Spleen (tissue), 13 donors: ENCODE measurements at regions of chr9 and their contacts with region 1.

Region 1: DNA sequence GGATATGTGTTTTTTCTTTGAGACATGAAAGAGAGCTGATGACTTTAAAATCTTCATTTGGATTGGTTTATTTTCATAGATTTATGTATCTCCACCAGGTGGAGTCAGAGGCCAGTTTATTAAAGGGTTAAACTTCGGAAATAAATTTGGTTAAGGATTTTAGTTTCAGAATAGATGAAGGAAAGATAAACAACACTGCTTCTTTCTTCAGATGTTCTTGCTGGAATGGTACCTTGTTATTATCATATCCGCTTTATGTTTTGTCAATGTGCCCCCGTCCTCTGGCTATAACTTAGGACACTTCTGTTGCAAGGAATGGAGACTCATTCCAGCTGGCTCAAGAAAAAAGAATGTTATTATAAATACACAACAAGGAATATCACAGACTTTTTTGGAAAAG is 81.2 kb downstream of the ALDH1A1 start:
- DNase-seq: no peak
- H3K4me3 ChIP-seq: no peak overlapping the region
- H3K27ac ChIP-seq: no peak overlapping the region
- H3K4me1 ChIP-seq: peaks cover 0 to 10% (median 0%) of the 10 kb centered on the region in 6 donors
- H3K27me3 ChIP-seq: no peaks in the 10 kb centered on the region
- CTCF ChIP-seq: peak in 7 of 11 experiments; percentile 3 to 49 (median 34)
- POLR2A ChIP-seq: no peak

Region 2: DNA sequence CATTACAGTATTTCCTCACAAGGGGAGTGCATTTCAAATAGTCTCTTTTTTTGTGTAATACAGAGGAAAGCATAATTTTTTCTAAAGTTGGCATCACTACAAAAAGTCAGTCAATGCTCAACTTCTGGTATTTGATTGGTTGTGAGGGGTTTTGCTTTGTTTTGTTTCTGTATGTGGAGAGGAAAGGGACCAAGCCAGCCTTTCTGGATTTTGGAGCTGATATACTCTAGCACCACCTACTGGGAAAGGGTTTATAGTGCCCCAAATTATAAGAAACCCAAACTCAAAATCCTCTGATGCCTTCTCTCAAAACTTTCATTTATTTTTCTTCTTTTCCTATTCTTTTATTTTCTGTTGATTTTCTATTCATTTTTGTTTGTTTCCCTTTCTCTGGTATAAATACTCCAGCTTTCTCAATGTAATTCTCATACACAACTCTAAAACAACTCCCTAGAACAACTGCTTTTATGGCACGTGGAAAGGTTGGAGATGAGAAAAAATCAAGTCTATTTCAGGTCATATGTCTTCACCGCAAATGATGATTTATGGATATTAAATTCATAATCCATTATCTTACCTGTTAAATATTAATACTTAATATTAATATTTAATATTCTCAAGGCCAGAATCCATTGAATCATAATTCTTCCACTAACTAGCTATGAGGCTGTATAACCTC is 210.4 kb after region 1 on chr9:
- intact Hi-C with region 1: loop called (anchors 10 kb)
- DNase-seq: no peak
- H3K4me3 ChIP-seq: no peak overlapping the region
- H3K27ac ChIP-seq: no peak overlapping the region
- H3K4me1 ChIP-seq: no peaks in the 10 kb centered on the region
- H3K27me3 ChIP-seq: no peaks in the 10 kb centered on the region
- CTCF ChIP-seq: peak in 9 of 11 experiments; percentile 11 to 69 (median 57)
- POLR2A ChIP-seq: no peak